Esophagus squamous epithelium (tissue), 5 donors: ENCODE measurements at regions of chr17 and their contacts with region 1.

Region 1: DNA sequence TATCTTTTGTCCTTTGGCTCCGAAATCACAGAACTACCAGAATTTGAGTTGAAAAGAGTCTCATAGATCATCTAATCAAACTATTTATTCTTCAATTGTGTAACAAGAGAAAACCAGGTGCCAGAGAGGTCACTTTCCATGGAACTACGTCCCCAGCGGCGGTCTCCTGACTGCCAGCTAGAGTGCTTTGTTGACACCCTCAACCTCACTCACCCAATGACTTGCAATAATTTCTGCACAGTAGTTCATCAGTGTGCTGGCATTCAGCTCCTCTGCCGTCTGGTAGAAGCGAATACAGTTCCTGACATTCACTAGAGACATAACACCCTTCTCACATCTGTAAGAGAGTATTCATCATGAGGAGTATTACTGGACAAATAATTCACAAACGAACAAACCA is 54.2 kb downstream of the ANKFY1 start:
- DNase-seq: no peak
- H3K4me3 ChIP-seq: no peak overlapping the region
- H3K27ac ChIP-seq: peak overlapping the region in 3 of 4 donors; percentile 34 to 55 (median 38)
- H3K4me1 ChIP-seq: peaks cover 0 to 10% (median 0%) of the 10 kb centered on the region in 3 donors
- H3K27me3 ChIP-seq: no peaks in the 10 kb centered on the region
- CTCF ChIP-seq: no peak
- POLR2A ChIP-seq: no peak

Region 2: DNA sequence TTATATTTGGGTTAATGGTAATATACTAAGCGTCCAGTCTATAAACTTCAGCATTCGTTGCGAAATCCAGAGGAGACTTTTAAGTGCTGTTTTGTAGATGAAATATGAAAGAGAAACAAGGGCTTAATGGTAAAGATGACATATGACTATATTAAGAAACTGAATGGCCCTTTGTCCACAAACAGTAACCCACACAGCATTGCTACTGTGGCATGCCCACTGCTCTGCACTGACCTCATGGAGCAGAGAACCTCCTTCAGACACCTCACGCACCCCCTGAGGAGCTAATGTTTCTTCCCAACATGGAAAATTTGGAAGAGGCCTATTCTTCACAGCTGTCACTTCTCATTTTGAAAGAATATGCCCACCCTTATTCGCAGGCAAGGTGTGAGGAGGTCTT is 707.1 kb before region 1 on chr17:
- intact Hi-C with region 1: no loop called
- DNase-seq: no peak
- H3K4me3 ChIP-seq: no peak overlapping the region
- H3K27ac ChIP-seq: no peak overlapping the region
- H3K4me1 ChIP-seq: no peaks in the 10 kb centered on the region
- H3K27me3 ChIP-seq: no peaks in the 10 kb centered on the region
- CTCF ChIP-seq: no peak
- POLR2A ChIP-seq: no peak

Region 3: DNA sequence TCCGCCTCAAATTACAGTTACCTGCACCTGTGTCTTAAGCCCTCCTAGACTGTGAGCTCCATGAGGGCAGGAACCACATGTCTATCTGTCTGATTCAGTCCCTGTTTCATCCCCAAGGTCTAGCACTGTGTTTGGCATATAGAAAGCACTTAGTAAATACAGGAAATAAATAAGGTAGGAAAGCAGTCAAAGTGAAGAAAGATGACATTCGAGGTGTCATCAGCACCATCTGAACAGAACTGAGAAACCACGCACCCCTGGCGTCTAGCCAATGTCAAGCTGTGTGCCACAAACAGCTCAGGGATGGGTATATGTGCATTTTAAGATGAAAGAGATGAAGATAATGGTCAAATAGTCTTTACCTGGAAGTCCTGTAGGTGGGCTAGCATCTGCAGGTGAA is 165.7 kb before region 1 on chr17:
- intact Hi-C with region 1: no loop called
- DNase-seq: no peak
- H3K4me3 ChIP-seq: no peak overlapping the region
- H3K27ac ChIP-seq: peak overlapping the region in 1 of 4 donors; percentile 13
- H3K4me1 ChIP-seq: no peaks in the 10 kb centered on the region
- H3K27me3 ChIP-seq: no peaks in the 10 kb centered on the region
- CTCF ChIP-seq: no peak
- POLR2A ChIP-seq: no peak

Region 4: DNA sequence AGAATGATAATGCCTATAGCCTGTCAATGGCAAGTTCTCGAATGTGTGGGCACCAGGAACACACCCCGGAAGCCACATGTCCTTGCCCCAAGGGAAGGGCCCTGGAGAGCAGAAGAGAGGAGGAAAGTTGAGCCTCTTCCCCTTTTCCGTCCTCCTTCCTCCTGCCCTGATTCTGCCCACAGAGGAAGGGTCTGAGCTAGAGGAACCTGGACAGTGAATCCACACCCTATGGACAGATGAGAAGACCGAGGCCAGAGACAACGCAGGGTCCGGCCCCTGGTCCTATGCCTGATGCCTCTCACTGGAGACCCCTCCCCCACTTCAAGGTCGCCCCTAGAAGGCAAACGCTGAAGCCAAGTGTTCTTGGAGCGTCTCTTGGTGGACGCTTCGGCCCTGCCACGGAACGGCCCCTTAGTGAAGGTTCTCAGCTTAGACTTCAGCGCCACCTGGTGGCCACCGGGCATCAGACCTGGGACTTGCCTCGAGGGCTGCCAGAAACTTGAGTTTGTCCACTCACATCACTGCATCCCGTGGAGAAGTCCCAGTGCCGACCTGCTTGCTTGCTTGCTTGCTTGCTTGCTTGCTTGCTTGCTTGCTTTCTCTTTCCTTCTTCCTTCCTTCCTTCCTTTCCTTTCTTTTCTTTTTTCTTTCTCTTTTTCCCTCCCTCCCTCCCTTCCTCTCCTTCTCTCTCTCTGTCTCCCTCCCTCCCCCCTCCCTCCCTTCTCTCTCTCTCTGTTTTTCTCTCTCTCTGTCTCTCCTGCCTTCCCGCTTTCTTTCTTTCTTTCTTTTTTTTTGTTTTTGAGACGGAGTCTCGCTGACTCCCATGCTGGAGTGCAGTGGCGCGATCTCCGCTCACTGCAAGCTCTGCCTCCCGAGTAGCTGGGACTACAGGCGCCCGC is 203.6 kb after region 1 on chr17:
- intact Hi-C with region 1: loop called (anchors 5 kb)
- DNase-seq: peak; percentile 45
- H3K4me3 ChIP-seq: peak overlapping the region in 1 of 4 donors; percentile 28
- H3K27ac ChIP-seq: peak overlapping the region in 1 of 4 donors; percentile 3
- H3K4me1 ChIP-seq: peaks cover 0 to 12% (median 8%) of the 10 kb centered on the region in 3 donors
- H3K27me3 ChIP-seq: no peaks in the 10 kb centered on the region
- CTCF ChIP-seq: peak; percentile 93 to 98 (median 96)
- POLR2A ChIP-seq: no peak